CD8-positive, alpha-beta memory T cell (primary cell): ENCODE measurements at regions of chr2 and their contacts with region 1.

Region 1: DNA sequence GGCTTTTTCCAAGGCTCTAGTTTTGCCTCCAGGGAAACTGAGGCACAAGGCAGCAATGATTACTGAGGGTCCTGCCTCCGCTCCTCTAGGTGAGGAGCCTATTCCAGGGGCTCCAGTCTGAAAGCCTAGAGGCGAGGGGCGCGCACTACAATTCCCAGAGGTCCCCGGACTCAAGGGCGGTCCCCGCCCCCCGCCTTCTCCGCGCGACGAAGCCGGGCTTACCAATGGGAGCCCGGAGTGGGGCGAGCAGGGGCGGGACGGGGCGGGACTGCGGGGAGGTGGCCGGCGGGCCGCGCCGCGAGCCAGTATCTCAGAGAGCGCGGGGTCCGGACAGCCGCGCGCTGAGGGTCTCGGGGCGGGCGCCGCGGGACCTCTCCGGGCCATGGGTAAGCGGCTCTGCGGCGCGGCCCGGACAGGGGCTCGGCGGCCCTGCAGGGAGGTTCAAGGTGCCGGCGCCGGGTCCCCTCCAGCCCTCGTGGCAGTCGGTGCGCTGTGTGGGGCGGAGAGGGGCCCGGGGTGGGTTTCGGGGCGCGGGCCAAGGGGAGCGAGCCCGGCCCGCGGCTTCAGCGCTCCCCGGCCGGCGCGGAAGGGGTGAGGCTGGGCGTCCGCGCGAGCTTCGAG is at the start of gene ARID5A:
- DNase-seq: peak; percentile 83 to 93 (median 88)
- H3K4me3 ChIP-seq: peak within 1 kb of the TSS; percentile 99
- H3K4me3 Mint-ChIP-seq: peak within 1 kb of the TSS; percentile 86 to 98 (median 97)
- H3K27ac ChIP-seq: peak within 1 kb of the TSS; percentile 92
- H3K27ac Mint-ChIP-seq: peak within 1 kb of the TSS; percentile 96 to 100 (median 98)
- H3K4me1 ChIP-seq: peaks cover 45% of the 10 kb centered on the region
- H3K4me1 Mint-ChIP-seq: peaks cover 41 to 60% (median 47%) of the 10 kb centered on the region in 3 donors
- H3K27me3 ChIP-seq: no peaks in the 10 kb centered on the region
- H3K27me3 Mint-ChIP-seq: peaks cover 0 to 10% of the 10 kb centered on the region in 2 donors
- total RNA-seq, gene ARID5A: 146 to 147 TPM

Region 2: GRCh38 chr2:96320728-96321622 is 215.6 kb before region 1 on chr2:
- CTCF ChIA-PET with region 1: no interaction called
- POLR2A ChIA-PET with region 1: interaction called, 17 read pairs
- DNase-seq: no peak
- H3K4me3 ChIP-seq: peak overlapping the region; percentile 47
- H3K4me3 Mint-ChIP-seq: peak overlapping the region; percentile 86 to 95 (median 91)
- H3K27ac ChIP-seq: peak overlapping the region; percentile 55
- H3K27ac Mint-ChIP-seq: peak overlapping the region; percentile 62 to 96 (median 81)
- H3K4me1 ChIP-seq: peaks cover 32% of the 10 kb centered on the region
- H3K4me1 Mint-ChIP-seq: peaks cover 57 to 76% (median 73%) of the 10 kb centered on the region in 3 donors
- H3K27me3 ChIP-seq: no peaks in the 10 kb centered on the region
- H3K27me3 Mint-ChIP-seq: no peaks in the 10 kb centered on the region

Region 3: DNA sequence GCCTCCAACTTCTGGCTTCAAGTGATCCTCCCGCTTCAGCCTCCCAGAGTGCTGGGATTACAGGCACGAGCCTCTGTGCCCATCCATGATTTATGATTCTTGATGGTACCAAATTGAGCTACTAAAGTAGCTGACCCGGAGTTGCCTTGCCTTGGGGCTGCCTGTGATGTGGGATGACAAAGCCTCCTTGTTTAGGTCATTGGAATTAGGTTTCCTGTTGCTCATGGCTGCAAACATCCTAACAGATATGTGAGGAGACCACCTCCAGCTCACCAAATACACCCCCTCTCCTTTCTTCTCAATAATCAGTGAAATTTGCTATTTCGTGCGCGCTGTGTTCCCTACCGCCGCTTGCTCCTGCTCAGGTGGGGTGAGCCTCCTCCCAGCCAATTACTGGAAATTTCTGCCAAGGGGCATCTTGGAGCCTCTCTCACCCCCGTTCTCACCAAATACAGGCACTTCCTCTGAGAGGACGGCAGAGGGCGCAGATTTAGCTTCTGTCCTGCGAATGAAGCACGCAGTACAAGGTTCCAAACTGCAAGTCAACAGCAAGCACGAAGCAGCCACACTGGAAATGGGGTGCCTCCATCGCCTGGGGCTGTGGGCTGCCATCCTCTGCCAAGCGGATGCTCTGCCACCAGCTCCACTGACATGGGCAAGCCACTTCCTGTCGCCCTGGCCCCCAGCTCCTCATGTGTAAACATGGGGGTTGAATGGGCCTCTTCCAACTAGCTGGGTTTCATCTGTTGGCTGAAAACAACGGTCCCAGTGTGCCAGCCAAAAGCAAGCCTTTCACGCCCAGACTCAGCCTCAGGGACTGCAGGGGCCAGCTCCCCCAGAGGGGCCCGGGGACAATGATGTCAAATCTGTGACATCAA is 129.3 kb before region 1 on chr2:
- CTCF ChIA-PET with region 1: interaction called, 13 read pairs
- POLR2A ChIA-PET with region 1: interaction called, 7 read pairs
- DNase-seq: peak; percentile 58 to 90 (median 84)
- H3K4me3 ChIP-seq: peak overlapping the region; percentile 33
- H3K4me3 Mint-ChIP-seq: peak overlapping the region; percentile 3 to 82 (median 72)
- H3K27ac ChIP-seq: peak overlapping the region; percentile 13
- H3K27ac Mint-ChIP-seq: peak overlapping the region; percentile 83 to 100 (median 94)
- H3K4me1 ChIP-seq: peaks cover 30% of the 10 kb centered on the region
- H3K4me1 Mint-ChIP-seq: peaks cover 29 to 41% (median 38%) of the 10 kb centered on the region in 3 donors
- H3K27me3 ChIP-seq: no peaks in the 10 kb centered on the region
- H3K27me3 Mint-ChIP-seq: no peaks in the 10 kb centered on the region

Region 4: GRCh38 chr2:96509114-96509846 is 27.3 kb before region 1 on chr2:
- CTCF ChIA-PET with region 1: interaction called, 16 read pairs
- POLR2A ChIA-PET with region 1: no interaction called
- DNase-seq: peak in 4 of 5 donors; percentile 21 to 64 (median 31)
- H3K4me3 ChIP-seq: no peak overlapping the region
- H3K4me3 Mint-ChIP-seq: peak overlapping the region in 2 of 7 donors; percentile 40 to 58
- H3K27ac ChIP-seq: no peak overlapping the region
- H3K27ac Mint-ChIP-seq: peak overlapping the region in 2 of 8 donors; percentile 26 to 35
- H3K4me1 ChIP-seq: peaks cover 11% of the 10 kb centered on the region
- H3K4me1 Mint-ChIP-seq: peaks cover 8 to 21% (median 13%) of the 10 kb centered on the region in 3 donors
- H3K27me3 ChIP-seq: peaks cover 4% of the 10 kb centered on the region
- H3K27me3 Mint-ChIP-seq: peaks cover 7 to 15% of the 10 kb centered on the region in 2 donors

Region 5: DNA sequence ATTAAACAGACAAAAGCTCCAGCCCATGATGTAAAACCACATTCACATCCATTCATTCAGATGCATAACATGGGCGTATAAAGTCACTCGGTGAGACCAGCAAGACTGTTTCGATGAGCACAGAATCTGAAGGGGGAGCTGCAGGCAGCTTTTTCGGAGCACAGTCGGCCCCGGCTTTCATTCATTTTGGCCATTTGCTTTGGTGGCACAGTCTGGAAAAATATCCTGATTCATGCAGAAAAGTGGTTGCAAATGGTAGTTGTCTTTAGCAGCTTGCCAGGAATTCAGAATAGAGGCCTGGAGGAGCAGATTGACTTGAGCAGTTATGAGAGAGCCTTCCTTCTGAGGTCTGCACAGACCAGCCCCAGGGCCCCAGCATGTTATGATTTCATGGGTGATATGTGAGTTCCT is 11.2 kb after region 1 on chr2:
- CTCF ChIA-PET with region 1: interaction called, 117 read pairs
- POLR2A ChIA-PET with region 1: interaction called, 51 read pairs
- DNase-seq: no peak
- H3K4me3 ChIP-seq: no peak overlapping the region
- H3K4me3 Mint-ChIP-seq: peak overlapping the region in 4 of 7 donors; percentile 15 to 79 (median 32)
- H3K27ac ChIP-seq: no peak overlapping the region
- H3K27ac Mint-ChIP-seq: peak overlapping the region in 5 of 8 donors; percentile 24 to 82 (median 74)
- H3K4me1 ChIP-seq: peaks cover 47% of the 10 kb centered on the region
- H3K4me1 Mint-ChIP-seq: peaks cover 42 to 58% (median 51%) of the 10 kb centered on the region in 3 donors
- H3K27me3 ChIP-seq: no peaks in the 10 kb centered on the region
- H3K27me3 Mint-ChIP-seq: no peaks in the 10 kb centered on the region

Region 6: GRCh38 chr2:96554293-96555145 is 18.0 kb after region 1 on chr2:
- CTCF ChIA-PET with region 1: interaction called, 117 read pairs
- POLR2A ChIA-PET with region 1: interaction called, 51 read pairs
- DNase-seq: peak; percentile 59 to 81 (median 67)
- H3K4me3 ChIP-seq: no peak overlapping the region
- H3K4me3 Mint-ChIP-seq: peak overlapping the region in 4 of 7 donors; percentile 13 to 61 (median 32)
- H3K27ac ChIP-seq: no peak overlapping the region
- H3K27ac Mint-ChIP-seq: peak overlapping the region in 6 of 8 donors; percentile 32 to 94 (median 57)
- H3K4me1 ChIP-seq: peaks cover 12% of the 10 kb centered on the region
- H3K4me1 Mint-ChIP-seq: peaks cover 15 to 37% (median 19%) of the 10 kb centered on the region in 3 donors
- H3K27me3 ChIP-seq: no peaks in the 10 kb centered on the region
- H3K27me3 Mint-ChIP-seq: no peaks in the 10 kb centered on the region